Lower lobe of right lung (tissue), 2 donors: ENCODE measurements at regions of chr12 and their contacts with region 1.

Region 1: DNA sequence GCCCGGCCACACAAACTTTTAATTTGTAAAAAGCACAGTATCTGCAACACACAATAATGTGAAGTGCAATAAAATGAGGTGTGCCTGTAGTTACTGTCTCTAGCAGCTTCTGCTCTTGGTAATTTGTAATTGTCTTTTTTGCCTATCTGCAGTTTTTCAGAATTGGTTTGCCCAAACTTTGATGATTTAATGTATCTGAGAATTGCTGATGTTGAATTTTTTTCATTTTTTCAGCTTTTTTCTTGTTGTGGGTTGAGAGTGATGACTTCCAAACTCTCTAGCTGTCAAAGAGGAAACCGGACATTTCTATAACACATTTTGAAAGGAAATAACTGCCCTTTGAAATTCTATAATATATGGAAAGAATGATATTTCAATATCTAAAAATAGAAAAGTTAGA is 236.9 kb downstream of the RERGL start:
- DNase-seq: no peak
- ATAC-seq: no peak
- H3K4me3 ChIP-seq: no peak overlapping the region
- H3K27ac ChIP-seq: no peak overlapping the region
- H3K4me1 ChIP-seq: no peaks in the 10 kb centered on the region
- H3K27me3 ChIP-seq: no peaks in the 10 kb centered on the region
- CTCF ChIP-seq: no peak

Region 2: GRCh38 chr12:17680220-17680619 is 172.8 kb before region 1 on chr12:
- intact Hi-C with region 1: no loop called
- DNase-seq: no peak
- ATAC-seq: no peak
- H3K4me3 ChIP-seq: no peak overlapping the region
- H3K27ac ChIP-seq: no peak overlapping the region
- H3K4me1 ChIP-seq: no peaks in the 10 kb centered on the region
- H3K27me3 ChIP-seq: no peaks in the 10 kb centered on the region
- CTCF ChIP-seq: no peak

Region 3: GRCh38 chr12:17763366-17763765 is 89.7 kb before region 1 on chr12:
- intact Hi-C with region 1: loop called (anchors 5 kb)
- DNase-seq: no peak
- ATAC-seq: no peak
- H3K4me3 ChIP-seq: no peak overlapping the region
- H3K27ac ChIP-seq: no peak overlapping the region
- H3K4me1 ChIP-seq: no peaks in the 10 kb centered on the region
- H3K27me3 ChIP-seq: no peaks in the 10 kb centered on the region
- CTCF ChIP-seq: no peak

Region 4: GRCh38 chr12:18057051-18057450 is 204.0 kb after region 1 on chr12:
- intact Hi-C with region 1: no loop called
- DNase-seq: no peak
- ATAC-seq: no peak
- H3K4me3 ChIP-seq: no peak overlapping the region
- H3K27ac ChIP-seq: no peak overlapping the region
- H3K4me1 ChIP-seq: no peaks in the 10 kb centered on the region
- H3K27me3 ChIP-seq: no peaks in the 10 kb centered on the region
- CTCF ChIP-seq: no peak